Left ventricle myocardium inferior (tissue), 1 donor: ENCODE measurements at regions of chr21 and their contacts with region 1.

Region 1: GRCh38 chr21:45074048-45074817 is at the start of gene ADARB1:
- DNase-seq: peak; percentile 68
- H3K4me3 ChIP-seq: peak within 1 kb of the TSS; percentile 97
- H3K27ac ChIP-seq: peak within 1 kb of the TSS; percentile 97
- H3K4me1 ChIP-seq: peaks cover 35% of the 10 kb centered on the region
- H3K27me3 ChIP-seq: no peaks in the 10 kb centered on the region
- CTCF ChIP-seq: no peak
- total RNA-seq, gene ADARB1: 15.5 TPM

Region 2: GRCh38 chr21:45130324-45130774 is 56.1 kb after region 1 on chr21:
- intact Hi-C with region 1: loop called (anchors 5 kb)
- DNase-seq: no peak
- H3K4me3 ChIP-seq: peak overlapping the region; percentile 44
- H3K27ac ChIP-seq: peak overlapping the region; percentile 81
- H3K4me1 ChIP-seq: peaks cover 78% of the 10 kb centered on the region
- H3K27me3 ChIP-seq: no peaks in the 10 kb centered on the region
- CTCF ChIP-seq: no peak